ENCODE measurements at regions of chr2 and their contacts with region 1.

Region 1: DNA sequence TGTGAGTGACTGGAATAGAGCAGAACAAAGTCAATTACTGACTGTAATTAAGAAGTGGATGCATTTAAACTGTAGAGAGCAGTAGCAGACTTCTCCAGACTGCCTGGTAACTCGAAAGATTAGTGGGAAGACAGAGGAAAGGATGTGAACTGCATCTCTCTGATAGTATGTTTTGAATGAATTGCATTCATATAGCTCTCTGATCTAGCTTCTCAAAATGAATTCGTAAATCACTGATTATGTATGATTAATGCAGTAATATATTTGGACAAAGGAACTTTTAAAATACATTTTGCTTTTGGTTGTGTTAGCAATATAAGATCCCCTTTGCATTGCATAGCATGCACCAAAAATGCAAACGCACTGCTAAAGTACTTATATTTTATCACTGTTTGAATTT is 304.0 kb downstream of the ARHGAP15 start:
- DNase-seq: no peak
- ATAC-seq: peak in 1 of 2 donors; percentile 79
- H3K4me3 ChIP-seq: no peak overlapping the region
- H3K27ac ChIP-seq: no peak overlapping the region
- H3K4me1 ChIP-seq: no peaks in the 10 kb centered on the region
- H3K27me3 ChIP-seq: no peaks in the 10 kb centered on the region

Region 2: DNA sequence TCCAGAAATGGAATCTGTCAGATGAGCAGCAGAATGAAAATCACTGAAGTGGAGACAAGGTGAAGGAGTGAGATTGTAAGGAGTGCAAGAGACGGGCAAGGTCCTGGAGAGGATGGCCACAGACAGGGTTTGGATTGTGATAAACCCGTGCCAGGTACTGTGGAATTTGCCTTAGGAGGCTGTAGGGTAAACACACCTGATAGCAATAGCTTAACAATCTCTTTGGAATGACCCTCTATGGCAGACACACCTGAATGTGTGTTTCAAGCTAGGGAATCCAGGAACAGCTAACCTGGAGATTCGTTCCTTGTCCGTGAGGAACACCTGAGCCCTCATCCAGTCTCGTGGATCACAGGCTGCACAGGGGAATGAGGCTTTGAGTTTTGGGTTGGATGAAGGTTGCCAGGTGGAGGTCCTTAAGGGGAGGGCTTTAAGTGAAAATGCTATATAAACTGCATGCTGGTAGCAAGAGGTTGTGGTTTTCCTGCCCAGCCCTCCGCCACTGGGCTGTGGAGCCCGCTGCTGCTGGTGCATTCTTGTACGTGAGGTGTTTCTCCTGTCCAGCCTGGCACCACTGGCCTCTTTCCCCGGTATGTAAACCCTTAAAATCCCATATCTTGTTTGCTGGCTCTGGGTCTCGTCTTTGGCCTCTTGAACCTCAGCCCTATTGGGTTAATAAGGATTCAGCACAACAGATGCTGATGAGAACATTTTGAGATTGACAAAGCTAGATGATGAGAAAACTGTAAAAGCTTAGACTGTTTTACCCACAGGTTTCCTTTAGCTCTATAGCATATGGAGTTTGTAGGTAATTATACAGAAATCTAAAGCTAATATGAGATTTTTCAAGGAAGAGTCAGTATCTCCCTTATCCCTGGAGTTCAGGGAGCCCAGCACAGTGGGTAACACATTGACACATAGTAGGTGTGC is 186.2 kb before region 1 on chr2:
- intact Hi-C with region 1: no loop called
- DNase-seq: no peak
- ATAC-seq: no peak
- H3K4me3 ChIP-seq: no peak overlapping the region
- H3K27ac ChIP-seq: no peak overlapping the region
- H3K4me1 ChIP-seq: no peaks in the 10 kb centered on the region
- H3K27me3 ChIP-seq: no peaks in the 10 kb centered on the region

Region 3: DNA sequence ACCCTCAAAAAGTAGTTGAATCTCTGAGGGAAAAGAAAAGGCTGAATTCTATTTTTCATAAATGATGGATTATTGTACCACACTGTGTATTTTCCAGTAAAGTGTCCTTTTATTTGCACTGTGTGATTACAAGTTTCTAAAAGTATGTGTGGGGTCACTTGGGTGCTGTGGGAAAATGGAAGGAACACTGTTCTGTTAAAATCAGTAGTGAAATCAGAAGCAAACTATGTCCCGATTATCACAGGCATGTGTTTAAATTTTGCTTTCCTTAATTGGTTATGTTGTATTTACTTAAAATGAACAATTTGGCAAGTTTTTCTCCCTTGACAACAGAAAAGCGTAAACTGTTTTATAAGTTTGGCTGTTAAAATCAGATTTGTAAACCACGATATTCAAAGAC is 49.1 kb after region 1 on chr2:
- intact Hi-C with region 1: loop called in 1 of 4 experiments (anchors 5 kb)
- DNase-seq: no peak
- ATAC-seq: peak; percentile 77 to 88
- H3K4me3 ChIP-seq: no peak overlapping the region
- H3K27ac ChIP-seq: no peak overlapping the region
- H3K4me1 ChIP-seq: no peaks in the 10 kb centered on the region
- H3K27me3 ChIP-seq: no peaks in the 10 kb centered on the region

Measured in right cardiac atrium (tissue), 5 donors.